T-cell (primary cell): ENCODE measurements at regions of chr13 and their contacts with region 1.

Region 1: GRCh38 chr13:27245610-27246009 is 5.7 kb upstream of the RPL21 start:
- DNase-seq: no peak
- ATAC-seq: no peak
- H3K4me3 ChIP-seq: no peak overlapping the region
- H3K4me3 Mint-ChIP-seq: no peak overlapping the region
- H3K27ac ChIP-seq: no peak overlapping the region
- H3K27ac Mint-ChIP-seq: no peak overlapping the region
- H3K4me1 ChIP-seq: peaks cover 0 to 6% of the 10 kb centered on the region in 2 experiments
- H3K4me1 Mint-ChIP-seq: peaks cover 16 to 22% (median 19%) of the 10 kb centered on the region in 3 donors
- H3K27me3 ChIP-seq: no peaks in the 10 kb centered on the region
- H3K27me3 Mint-ChIP-seq: no peaks in the 10 kb centered on the region

Region 2: DNA sequence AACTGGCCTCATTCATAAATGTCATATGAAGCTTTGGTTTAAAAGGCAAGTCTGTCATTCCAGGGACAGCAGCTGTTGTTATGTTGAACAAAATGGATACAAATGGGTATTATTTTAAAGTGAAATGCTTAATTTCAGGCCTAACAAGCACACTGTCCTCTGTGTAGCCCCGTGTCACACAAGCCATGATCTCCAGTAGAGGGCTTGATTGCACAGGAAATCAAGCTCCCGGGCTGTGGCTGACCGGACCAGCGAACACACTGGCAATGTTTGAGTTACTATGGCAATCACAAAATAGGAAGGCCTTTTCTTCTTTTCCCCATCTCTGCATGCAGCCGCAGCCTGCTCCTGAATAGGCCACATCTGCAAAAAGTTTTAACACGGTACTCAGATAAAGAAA is 482.7 kb after region 1 on chr13:
- CTCF ChIA-PET with region 1: no interaction called
- POLR2A ChIA-PET with region 1: interaction called in 1 of 2 experiments, 13 read pairs
- DNase-seq: no peak
- ATAC-seq: no peak
- H3K4me3 ChIP-seq: no peak overlapping the region
- H3K4me3 Mint-ChIP-seq: no peak overlapping the region
- H3K27ac ChIP-seq: no peak overlapping the region
- H3K27ac Mint-ChIP-seq: no peak overlapping the region
- H3K4me1 ChIP-seq: peaks cover 0 to 13% of the 10 kb centered on the region in 2 experiments
- H3K4me1 Mint-ChIP-seq: peaks cover 21 to 23% (median 22%) of the 10 kb centered on the region in 3 donors
- H3K27me3 ChIP-seq: no peaks in the 10 kb centered on the region
- H3K27me3 Mint-ChIP-seq: peaks cover 5 to 14% of the 10 kb centered on the region in 2 donors